ENCODE measurements at regions of chr3 and their contacts with region 1.

Region 1: DNA sequence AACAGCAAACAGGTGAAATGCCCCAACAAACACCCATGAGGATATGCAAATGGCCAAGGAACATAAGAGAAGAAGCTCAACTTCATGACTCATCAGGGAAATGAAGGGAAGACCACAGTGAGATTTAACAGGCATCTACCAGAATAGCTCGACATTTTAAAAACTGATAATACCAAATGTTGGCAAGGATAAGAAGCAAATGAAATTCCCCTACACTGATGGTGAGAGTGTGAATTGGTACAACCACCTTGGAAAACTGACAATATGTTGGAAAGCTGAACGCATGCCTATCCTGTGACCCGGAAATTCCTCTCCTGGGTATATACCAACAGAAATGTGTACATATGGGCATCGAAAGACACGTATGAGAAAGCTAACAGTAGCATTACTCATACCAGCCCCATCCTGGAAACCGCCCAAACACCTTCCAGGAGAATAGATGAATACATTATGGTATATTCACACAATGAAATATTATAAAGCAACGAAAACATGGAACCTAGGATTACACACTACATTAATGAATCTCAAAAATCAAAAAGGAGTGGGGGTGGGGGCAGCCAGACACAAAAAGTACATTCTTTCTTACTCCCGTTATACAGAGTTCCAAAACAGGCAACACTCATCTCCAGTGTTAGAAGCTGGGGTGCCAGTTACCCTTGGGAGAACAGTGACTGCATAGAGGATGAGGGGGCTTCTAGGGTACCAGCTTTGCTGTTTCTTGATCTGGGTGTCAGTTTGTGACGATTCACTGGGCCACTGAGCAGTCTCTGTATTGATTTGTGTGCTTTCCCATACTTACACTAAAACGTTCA is 16.9 kb downstream of the RFTN1 start:
- DNase-seq: no peak
- H3K4me3 ChIP-seq: no peak overlapping the region
- H3K27ac ChIP-seq: no peak overlapping the region
- H3K4me1 ChIP-seq: peaks cover 28% of the 10 kb centered on the region
- H3K27me3 ChIP-seq: no peaks in the 10 kb centered on the region
- CTCF ChIP-seq: no peak
- POLR2A ChIP-seq: no peak

Region 2: GRCh38 chr3:16467393-16467792 is 29.2 kb before region 1 on chr3:
- CTCF ChIA-PET with region 1: interaction called, 4 read pairs
- POLR2A ChIA-PET with region 1: no interaction called
- dilution Hi-C with region 1: no loop called
- intact Hi-C with region 1: loop called (anchors 1 kb)
- DNase-seq: no peak
- H3K4me3 ChIP-seq: no peak overlapping the region
- H3K27ac ChIP-seq: no peak overlapping the region
- H3K4me1 ChIP-seq: peaks cover 22% of the 10 kb centered on the region
- H3K27me3 ChIP-seq: no peaks in the 10 kb centered on the region
- CTCF ChIP-seq: no peak
- POLR2A ChIP-seq: no peak

Region 3: GRCh38 chr3:16476641-16477455 is 19.8 kb before region 1 on chr3:
- CTCF ChIA-PET with region 1: interaction called, 14 read pairs
- POLR2A ChIA-PET with region 1: no interaction called
- dilution Hi-C with region 1: no loop called
- intact Hi-C with region 1: loop called (anchors 2 kb)
- DNase-seq: peak; percentile 90
- H3K4me3 ChIP-seq: no peak overlapping the region
- H3K27ac ChIP-seq: peak overlapping the region; percentile 42
- H3K4me1 ChIP-seq: peaks cover 52% of the 10 kb centered on the region
- H3K27me3 ChIP-seq: no peaks in the 10 kb centered on the region
- CTCF ChIP-seq: no peak
- POLR2A ChIP-seq: no peak

Region 4: DNA sequence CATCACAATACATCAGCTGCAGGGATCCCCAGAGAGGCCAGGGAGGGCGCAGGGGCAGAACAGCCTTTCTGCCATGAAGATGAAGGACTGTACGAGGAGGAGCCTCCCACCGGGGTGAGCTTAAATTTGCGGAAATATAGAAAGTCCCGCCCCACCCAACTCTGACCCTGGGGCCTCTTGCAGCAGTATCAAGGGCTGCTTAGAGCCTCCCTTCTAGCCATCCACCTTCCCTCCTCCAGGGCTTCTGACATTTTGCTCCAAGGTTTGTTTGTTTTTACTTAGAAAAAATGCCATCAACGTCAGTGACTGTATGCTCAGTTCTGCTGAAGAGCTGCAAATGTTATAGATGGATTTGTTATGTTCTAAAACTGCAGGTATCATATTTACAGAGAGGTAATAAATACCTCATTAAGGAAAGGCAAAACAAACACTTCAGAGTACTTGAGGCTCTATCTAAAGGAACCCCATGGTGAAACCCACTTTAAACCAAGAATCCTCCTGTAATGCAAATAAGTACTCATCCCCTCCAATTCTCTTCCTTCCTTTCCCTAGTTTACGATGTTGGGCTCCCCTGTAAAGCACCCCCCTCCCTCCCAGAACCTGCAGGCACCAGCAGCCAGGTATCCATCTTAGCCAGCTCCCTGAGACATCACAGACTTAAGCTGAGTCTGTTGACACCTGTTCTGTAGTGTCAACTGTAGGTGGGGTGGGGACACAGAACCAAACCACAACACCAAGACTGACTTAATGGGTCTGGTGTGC is 13.7 kb before region 1 on chr3:
- CTCF ChIA-PET with region 1: interaction called, 8 read pairs
- POLR2A ChIA-PET with region 1: interaction called, 5 read pairs
- dilution Hi-C with region 1: no loop called
- intact Hi-C with region 1: loop called (anchors 1 kb)
- DNase-seq: no peak
- H3K4me3 ChIP-seq: no peak overlapping the region
- H3K27ac ChIP-seq: no peak overlapping the region
- H3K4me1 ChIP-seq: peaks cover 64% of the 10 kb centered on the region
- H3K27me3 ChIP-seq: no peaks in the 10 kb centered on the region
- CTCF ChIP-seq: no peak
- POLR2A ChIP-seq: no peak

Region 5: GRCh38 chr3:16600780-16601539 is 104.3 kb after region 1 on chr3:
- CTCF ChIA-PET with region 1: no interaction called
- POLR2A ChIA-PET with region 1: no interaction called
- dilution Hi-C with region 1: no loop called
- intact Hi-C with region 1: no loop called
- DNase-seq: peak; percentile 80
- H3K4me3 ChIP-seq: no peak overlapping the region
- H3K27ac ChIP-seq: no peak overlapping the region
- H3K4me1 ChIP-seq: no peaks in the 10 kb centered on the region
- H3K27me3 ChIP-seq: peaks cover 0 to 6% of the 10 kb centered on the region in 2 experiments
- CTCF ChIP-seq: peak; percentile 56 to 61
- POLR2A ChIP-seq: no peak

Region 6: GRCh38 chr3:16618721-16619120 is 122.1 kb after region 1 on chr3:
- CTCF ChIA-PET with region 1: no interaction called
- POLR2A ChIA-PET with region 1: no interaction called
- dilution Hi-C with region 1: no loop called
- intact Hi-C with region 1: no loop called
- DNase-seq: no peak
- H3K4me3 ChIP-seq: no peak overlapping the region
- H3K27ac ChIP-seq: no peak overlapping the region
- H3K4me1 ChIP-seq: no peaks in the 10 kb centered on the region
- H3K27me3 ChIP-seq: peaks cover 0 to 4% of the 10 kb centered on the region in 2 experiments
- CTCF ChIP-seq: no peak
- POLR2A ChIP-seq: no peak

Measured in endothelial cell of umbilical vein (primary cell).